CD14-positive monocyte (primary cell): ENCODE measurements at regions of chr16 and their contacts with region 1.

Region 1: DNA sequence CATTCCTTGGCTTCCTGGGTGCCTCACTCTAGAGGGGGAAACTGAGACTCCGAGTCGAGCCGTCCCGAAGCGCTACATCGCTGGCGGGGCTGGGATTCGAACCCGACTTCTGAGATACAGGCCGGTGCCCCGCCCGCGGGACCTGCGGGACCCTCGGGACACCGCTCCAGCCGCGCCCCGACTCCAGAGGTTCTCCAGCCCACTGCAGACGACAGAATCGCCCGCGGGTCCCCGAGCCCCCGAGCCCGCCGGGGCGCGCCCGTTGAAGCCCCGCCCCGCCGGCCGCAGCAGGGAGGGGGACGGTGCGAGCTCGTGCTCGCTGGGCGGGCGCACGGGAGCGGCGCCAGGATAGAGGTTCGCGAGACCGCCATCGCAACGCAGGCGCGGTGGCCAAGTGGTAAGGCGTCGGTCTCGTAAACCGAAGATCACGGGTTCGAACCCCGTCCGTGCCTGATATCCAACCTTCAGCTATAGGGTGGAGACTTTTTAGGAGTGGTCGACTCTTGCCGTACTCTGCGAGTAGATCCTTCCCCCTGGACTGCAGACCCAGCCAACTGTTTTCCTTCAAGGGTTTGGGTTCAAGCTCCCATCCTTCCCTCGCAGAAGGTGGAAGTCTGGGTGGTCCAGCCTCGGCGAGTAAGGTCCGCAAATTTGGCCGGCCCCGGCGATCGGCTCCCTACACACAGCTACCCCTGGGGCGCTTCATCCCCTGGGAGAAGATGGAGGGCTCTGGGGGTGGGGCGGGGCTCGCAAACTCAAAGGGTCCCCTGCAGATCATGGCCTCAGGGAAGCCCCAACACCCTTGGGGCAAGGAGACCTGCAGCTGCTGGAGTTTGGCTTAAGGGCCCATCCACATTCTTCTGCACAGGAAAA is 214.6 kb downstream of the MRTFB start:
- DNase-seq: peak; percentile 88 to 92 (median 89)
- H3K4me3 ChIP-seq: peak overlapping the region; percentile 86 to 92 (median 88)
- H3K4me3 Mint-ChIP-seq: peak overlapping the region; percentile 91 to 92
- H3K27ac ChIP-seq: peak overlapping the region; percentile 68 to 73
- H3K27ac Mint-ChIP-seq: peak overlapping the region; percentile 57 to 88 (median 76)
- H3K4me1 ChIP-seq: peaks cover 32 to 42% of the 10 kb centered on the region in 2 donors
- H3K4me1 Mint-ChIP-seq: peaks cover 49% of the 10 kb centered on the region
- H3K27me3 ChIP-seq: no peaks in the 10 kb centered on the region
- H3K27me3 Mint-ChIP-seq: peaks cover 0 to 3% (median 3%) of the 10 kb centered on the region in 3 donors
- CTCF ChIP-seq: no peak

Region 2: GRCh38 chr16:14268073-14268472 is 17.7 kb before region 1 on chr16:
- intact Hi-C with region 1: no loop called
- DNase-seq: no peak
- H3K4me3 ChIP-seq: no peak overlapping the region
- H3K4me3 Mint-ChIP-seq: no peak overlapping the region
- H3K27ac ChIP-seq: no peak overlapping the region
- H3K27ac Mint-ChIP-seq: no peak overlapping the region
- H3K4me1 ChIP-seq: no peaks in the 10 kb centered on the region
- H3K4me1 Mint-ChIP-seq: no peaks in the 10 kb centered on the region
- H3K27me3 ChIP-seq: no peaks in the 10 kb centered on the region
- H3K27me3 Mint-ChIP-seq: peaks cover 0 to 2% (median 1%) of the 10 kb centered on the region in 3 donors
- CTCF ChIP-seq: no peak

Region 3: GRCh38 chr16:14354551-14355351 is 69.0 kb after region 1 on chr16:
- intact Hi-C with region 1: loop called in 1 of 2 experiments (anchors 5 kb)
- DNase-seq: peak; percentile 92 to 96 (median 93)
- H3K4me3 ChIP-seq: peak overlapping the region in 1 of 3 experiments; percentile 31
- H3K4me3 Mint-ChIP-seq: peak overlapping the region; percentile 6 to 67
- H3K27ac ChIP-seq: peak overlapping the region; percentile 74 to 81
- H3K27ac Mint-ChIP-seq: peak overlapping the region; percentile 67 to 92 (median 89)
- H3K4me1 ChIP-seq: peaks cover 17 to 25% of the 10 kb centered on the region in 2 donors
- H3K4me1 Mint-ChIP-seq: peaks cover 21% of the 10 kb centered on the region
- H3K27me3 ChIP-seq: peaks cover 0 to 5% of the 10 kb centered on the region in 2 donors
- H3K27me3 Mint-ChIP-seq: peaks cover 32 to 35% (median 33%) of the 10 kb centered on the region in 3 donors
- CTCF ChIP-seq: no peak

Region 4: DNA sequence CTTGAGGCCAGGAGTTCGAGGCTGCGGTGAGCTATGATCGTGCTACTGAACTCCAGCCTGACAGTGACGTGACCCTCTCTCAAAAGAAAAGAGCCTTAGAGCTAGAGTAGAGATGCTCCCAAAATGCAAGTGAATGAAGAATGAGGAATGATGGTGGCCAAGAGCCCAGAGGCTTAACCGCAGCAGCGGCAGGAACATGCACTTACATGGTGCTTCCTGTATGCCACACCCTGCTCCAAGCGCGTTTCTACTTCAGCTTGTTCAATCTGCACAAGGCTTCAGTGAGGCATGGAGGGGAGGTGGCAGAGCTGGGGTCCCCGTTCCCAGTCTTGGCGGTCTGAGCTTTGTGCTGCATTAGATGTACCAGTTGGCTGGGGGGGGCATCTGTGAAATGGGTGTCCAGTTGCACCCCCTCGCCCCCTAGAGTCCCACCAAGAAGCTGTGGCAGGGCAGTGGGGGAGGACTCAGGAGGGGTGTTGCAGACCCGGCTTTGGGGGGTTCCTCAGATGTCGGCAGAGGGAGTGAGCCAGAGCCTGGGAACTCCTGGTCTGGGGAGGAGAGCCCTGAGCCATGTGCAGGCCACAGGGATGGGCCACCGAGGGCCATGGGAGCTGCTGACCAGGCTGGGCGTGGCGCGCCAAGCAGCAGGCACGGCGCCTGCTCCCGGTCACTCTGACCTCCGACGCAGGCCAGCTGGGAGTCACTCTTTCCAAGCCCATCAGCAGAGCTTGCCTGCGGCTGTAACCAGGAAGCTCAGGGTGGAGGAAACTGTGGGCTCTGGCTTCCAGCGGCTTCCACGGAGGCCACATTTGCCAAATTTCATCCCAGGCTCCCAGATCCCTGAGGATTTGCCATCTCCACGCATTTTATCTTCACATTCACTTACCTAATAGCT is 84.2 kb after region 1 on chr16:
- intact Hi-C with region 1: no loop called
- DNase-seq: no peak
- H3K4me3 ChIP-seq: no peak overlapping the region
- H3K4me3 Mint-ChIP-seq: peak overlapping the region in 1 of 2 donors; percentile 39
- H3K27ac ChIP-seq: no peak overlapping the region
- H3K27ac Mint-ChIP-seq: peak overlapping the region in 1 of 7 donors; percentile 13
- H3K4me1 ChIP-seq: peaks cover 6 to 15% of the 10 kb centered on the region in 2 donors
- H3K4me1 Mint-ChIP-seq: peaks cover 12% of the 10 kb centered on the region
- H3K27me3 ChIP-seq: no peaks in the 10 kb centered on the region
- H3K27me3 Mint-ChIP-seq: peaks cover 8 to 15% (median 10%) of the 10 kb centered on the region in 3 donors
- CTCF ChIP-seq: no peak

Region 5: DNA sequence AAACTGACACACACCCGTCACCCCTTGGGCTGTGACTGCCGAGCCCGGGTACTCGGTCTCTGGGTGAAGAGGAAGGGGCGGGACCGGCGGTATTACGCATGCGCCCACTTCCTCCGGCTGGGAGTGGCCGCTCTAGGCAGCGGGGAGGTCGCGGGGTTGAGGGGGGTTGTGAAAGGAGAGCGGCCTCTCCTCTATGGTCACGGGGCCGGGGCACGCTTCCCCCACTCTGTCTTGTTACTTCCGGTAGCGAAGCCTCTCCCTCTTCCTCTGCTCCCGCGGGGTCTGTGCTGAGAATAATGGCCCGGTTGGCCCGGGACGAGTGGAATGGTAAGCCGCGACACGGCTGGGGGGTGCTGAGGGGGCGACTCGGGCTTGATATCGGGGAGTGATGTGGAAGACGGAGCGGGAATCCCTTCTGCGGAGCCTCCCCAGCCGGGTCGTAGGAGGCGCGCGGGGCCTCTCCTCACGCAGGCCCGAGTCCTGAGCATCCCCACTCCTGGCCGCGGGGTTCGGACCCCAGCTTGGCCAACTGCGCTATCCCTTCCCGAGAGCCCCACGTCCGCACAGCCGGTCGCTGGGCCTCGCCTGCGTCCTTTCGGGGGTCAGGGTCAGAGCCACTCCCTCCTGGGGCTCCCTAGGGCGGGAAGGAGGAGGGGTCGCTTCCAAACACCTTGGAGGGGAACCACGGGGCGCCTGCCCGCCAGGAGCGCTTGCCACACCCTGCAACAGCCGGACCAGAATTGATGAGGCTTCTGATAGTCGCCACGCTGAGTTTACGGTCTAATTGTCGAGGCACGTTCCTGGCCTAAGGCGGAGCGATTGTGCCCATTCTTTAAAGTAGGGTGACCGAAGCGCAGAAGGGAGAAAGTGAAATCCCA is 347.2 kb after region 1 on chr16 and contains the start of gene BFAR:
- intact Hi-C with region 1: loop called in 1 of 2 experiments (anchors 10 kb)
- DNase-seq: peak; percentile 98 to 99 (median 99)
- H3K4me3 ChIP-seq: peak within 1 kb of the TSS; percentile 65 to 95 (median 93)
- H3K4me3 Mint-ChIP-seq: peak within 1 kb of the TSS; percentile 99
- H3K27ac ChIP-seq: peak within 1 kb of the TSS; percentile 91 to 94
- H3K27ac Mint-ChIP-seq: peak within 1 kb of the TSS; percentile 97 to 100 (median 97)
- H3K4me1 ChIP-seq: peaks cover 39 to 48% of the 10 kb centered on the region in 2 donors
- H3K4me1 Mint-ChIP-seq: peaks cover 43% of the 10 kb centered on the region
- H3K27me3 ChIP-seq: no peaks in the 10 kb centered on the region
- H3K27me3 Mint-ChIP-seq: no peaks in the 10 kb centered on the region
- CTCF ChIP-seq: no peak
- polyA plus RNA-seq, gene BFAR: 27.5 to 36.0 (median 28.6) TPM